Left lung (tissue), 14 donors: ENCODE measurements at regions of chr7 and their contacts with region 1.

Region 1: GRCh38 chr7:98795741-98796493 is 73.9 kb downstream of the TMEM130 start:
- DNase-seq: peak in 1 of 4 donors; percentile 28
- ATAC-seq: no peak
- H3K4me3 ChIP-seq: no peak overlapping the region
- H3K27ac ChIP-seq: no peak overlapping the region
- H3K4me1 ChIP-seq: no peaks in the 10 kb centered on the region
- H3K27me3 ChIP-seq: no peaks in the 10 kb centered on the region
- CTCF ChIP-seq: no peak

Region 2: DNA sequence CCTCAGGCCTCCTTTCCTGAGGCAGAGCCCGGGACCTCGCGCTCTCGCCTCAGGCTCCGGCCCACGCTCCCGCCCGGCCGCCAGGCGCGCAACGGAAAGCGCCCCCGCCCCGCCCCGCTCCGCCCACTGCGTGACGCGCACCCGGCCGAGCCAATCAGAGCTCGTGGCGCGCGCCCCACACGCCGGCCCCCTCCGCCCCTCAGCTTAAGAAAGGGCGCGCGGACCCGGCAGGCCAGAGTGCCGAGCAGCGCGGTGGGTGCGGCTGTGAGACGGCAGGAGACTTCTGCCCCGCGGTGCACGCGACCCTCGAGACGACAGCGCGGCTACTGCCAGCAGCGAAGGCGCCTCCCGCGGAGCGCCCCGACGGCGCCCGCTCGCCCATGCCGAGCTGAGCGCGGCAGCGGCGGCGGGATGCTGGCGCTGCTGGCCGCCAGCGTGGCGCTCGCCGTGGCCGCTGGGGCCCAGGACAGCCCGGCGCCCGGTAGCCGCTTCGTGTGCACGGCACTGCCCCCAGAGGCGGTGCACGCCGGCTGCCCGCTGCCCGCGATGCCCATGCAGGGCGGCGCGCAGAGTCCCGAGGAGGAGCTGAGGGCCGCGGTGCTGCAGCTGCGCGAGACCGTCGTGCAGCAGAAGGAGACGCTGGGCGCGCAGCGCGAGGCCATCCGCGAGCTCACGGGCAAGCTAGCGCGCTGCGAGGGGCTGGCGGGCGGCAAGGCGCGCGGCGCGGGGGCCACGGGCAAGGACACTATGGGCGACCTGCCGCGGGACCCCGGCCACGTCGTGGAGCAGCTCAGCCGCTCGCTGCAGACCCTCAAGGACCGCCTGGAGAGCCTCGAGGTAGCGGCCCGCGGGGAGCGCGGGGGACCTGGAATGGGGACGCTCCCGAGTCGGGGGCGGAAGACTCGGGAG is 178.6 kb before region 1 on chr7 and contains the start of gene NPTX2:
- intact Hi-C with region 1: no loop called
- DNase-seq: peak in 1 of 4 donors; percentile 79
- ATAC-seq: peak; percentile 70
- H3K4me3 ChIP-seq: no peak within 1 kb of the TSS
- H3K27ac ChIP-seq: no peak within 1 kb of the TSS
- H3K4me1 ChIP-seq: peaks cover 0 to 19% of the 10 kb centered on the region in 2 donors
- H3K27me3 ChIP-seq: peaks cover 30 to 86% of the 10 kb centered on the region in 2 donors
- CTCF ChIP-seq: no peak
- polyA plus RNA-seq, gene NPTX2: 0.18 to 0.53 (median 0.37) TPM

Region 3: DNA sequence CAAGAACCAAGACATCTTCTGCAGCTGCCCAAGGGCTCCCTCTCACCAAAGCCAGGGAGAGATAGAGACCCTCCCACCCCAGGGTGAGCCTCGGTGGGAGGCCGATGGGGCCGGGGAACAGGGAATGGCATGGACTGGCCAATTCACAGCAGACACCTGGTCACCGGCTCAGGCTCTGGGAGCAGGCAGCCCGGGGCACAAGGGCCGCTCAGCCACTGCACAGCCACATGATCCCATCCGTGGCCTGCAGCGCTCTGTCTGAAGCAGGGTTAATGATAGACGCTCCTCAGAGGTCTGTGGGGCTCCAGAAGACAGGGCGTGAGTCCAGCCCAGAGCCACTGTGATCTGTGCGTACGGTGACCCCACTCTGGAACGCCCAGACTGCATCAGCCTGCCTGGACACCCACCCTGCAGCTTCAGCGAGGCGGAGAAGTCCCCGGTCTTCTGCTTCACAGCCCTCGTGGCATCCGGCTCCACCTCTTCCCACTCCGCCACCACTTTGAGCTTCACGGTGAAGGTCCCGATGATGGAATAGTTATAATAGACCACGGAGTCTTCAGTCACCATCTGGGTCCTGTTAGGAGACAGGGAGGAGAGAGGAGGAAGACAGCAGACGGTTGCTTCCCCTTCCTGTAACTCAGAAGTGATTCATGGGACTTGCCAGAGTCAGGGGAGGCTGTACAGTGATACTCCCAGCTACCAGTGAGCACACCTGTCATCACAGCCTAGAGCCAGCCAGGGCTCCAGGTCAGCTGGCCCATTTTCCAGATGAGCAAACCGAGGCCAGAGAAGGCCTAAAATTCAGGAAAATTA is 59.9 kb after region 1 on chr7:
- intact Hi-C with region 1: loop called in 1 of 2 experiments (anchors 10 kb)
- DNase-seq: peak in 1 of 4 donors; percentile 77
- ATAC-seq: no peak
- H3K4me3 ChIP-seq: no peak overlapping the region
- H3K27ac ChIP-seq: no peak overlapping the region
- H3K4me1 ChIP-seq: no peaks in the 10 kb centered on the region
- H3K27me3 ChIP-seq: peaks cover 0 to 6% of the 10 kb centered on the region in 2 donors
- CTCF ChIP-seq: no peak